Endothelial cell of umbilical vein (primary cell): ENCODE measurements at regions of chr6 and their contacts with region 1.

Region 1: DNA sequence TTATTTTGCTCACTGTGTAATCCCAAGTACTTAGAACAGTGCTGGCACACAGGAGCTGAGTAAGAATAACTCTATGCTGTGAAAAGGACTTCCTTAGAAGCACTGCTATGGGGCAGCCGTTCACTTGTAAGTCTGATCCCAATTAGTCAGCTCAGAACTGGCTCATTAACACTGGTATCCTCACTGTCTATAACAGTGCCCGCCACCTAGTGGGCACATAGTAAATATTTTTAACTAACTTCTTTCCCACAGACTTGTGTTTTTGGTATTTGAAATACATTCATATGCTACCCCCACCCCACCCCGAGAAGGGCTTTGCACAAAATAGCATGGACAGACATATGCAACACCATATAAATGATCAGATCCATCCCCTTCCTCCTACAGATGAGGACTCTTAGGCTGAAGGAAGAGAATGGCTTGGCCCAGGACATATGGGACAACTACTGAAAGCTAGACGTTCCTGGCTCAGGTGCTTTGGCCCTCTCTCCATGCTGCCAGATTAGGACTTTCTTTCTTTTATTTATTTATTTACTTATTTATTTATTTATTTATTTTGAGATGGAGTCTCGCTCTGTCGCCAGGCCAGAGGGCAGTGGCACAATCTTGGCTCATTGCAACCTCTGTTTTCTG is 47.1 kb downstream of the DST start:
- DNase-seq: peak; percentile 76
- H3K4me3 ChIP-seq: no peak overlapping the region
- H3K27ac ChIP-seq: no peak overlapping the region
- H3K4me1 ChIP-seq: no peaks in the 10 kb centered on the region
- H3K27me3 ChIP-seq: no peaks in the 10 kb centered on the region
- CTCF ChIP-seq: peak; percentile 54 to 61
- POLR2A ChIP-seq: no peak

Region 2: DNA sequence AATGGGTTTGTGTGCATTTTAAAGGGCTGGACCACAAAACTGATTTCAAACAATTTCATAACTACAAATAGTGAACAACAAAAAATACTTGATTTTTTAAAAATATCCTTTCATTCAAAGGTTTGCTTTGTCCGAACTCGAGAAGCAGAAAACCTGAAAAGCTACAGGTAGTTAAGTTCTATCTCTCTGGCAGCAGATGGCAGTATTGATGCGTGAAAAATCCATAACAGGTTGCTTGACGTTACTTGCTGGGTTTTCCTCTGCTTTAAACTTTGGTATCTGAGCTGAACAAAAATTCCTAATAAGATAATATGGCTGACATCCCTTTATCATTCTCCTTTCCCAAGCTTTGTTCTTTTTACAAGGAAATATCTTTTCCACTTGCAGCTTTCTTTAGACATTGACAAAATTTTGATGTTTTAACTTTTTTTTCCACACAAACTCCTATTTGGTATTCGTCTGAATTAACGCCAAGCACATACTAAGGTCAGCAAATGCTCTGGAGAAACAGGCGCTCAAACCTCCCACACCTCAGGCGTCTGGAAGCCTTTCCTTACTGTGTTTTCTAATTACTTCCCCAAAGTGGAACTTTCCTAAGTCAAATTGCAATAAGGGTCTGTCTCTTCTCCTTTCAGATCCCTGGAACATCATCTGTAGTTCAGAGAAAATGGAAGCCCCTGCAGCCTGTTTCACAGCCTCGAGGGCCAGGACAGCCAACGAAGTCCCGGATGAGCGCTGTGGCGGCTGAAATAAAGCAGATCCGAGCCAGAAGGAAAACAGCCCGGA is 1318.7 kb before region 1 on chr6:
- CTCF ChIA-PET with region 1: interaction called, 6 read pairs
- POLR2A ChIA-PET with region 1: no interaction called
- dilution Hi-C with region 1: no loop called
- intact Hi-C with region 1: loop called (anchors 10 kb)
- DNase-seq: peak; percentile 64
- H3K4me3 ChIP-seq: no peak overlapping the region
- H3K27ac ChIP-seq: no peak overlapping the region
- H3K4me1 ChIP-seq: no peaks in the 10 kb centered on the region
- H3K27me3 ChIP-seq: peaks cover 0 to 2% of the 10 kb centered on the region in 2 experiments
- CTCF ChIP-seq: peak; percentile 47 to 56
- POLR2A ChIP-seq: no peak

Region 3: DNA sequence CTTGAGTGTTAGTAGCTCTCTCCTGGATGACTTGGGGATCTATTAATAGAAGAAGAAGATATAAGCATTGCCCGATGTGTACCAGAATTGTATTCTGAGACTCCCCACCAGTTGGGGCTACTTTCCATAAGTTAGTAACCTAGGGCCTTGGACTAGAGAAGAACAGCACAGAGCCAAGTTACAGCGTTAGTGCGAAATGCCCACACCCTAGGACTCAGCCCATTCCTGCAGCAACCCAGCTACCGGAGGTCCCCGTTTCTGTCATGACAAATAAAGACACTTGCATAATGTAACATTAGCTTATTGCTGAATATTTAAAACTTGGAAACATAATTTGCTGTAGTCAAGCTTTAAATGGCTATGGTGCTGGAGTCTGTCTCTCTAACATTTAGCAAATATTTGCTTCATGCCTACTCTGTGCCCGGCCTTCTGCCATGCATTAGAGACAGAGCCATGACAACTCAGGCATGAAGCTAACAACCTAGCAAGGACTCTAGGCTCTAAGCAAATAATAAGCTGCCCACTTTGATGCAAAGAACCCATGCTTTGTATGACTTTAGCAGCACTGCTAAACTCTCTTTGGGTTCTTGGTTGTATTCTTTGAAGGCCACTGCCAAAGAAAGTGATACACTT is 244.9 kb before region 1 on chr6:
- CTCF ChIA-PET with region 1: interaction called, 47 read pairs
- POLR2A ChIA-PET with region 1: no interaction called
- dilution Hi-C with region 1: no loop called
- intact Hi-C with region 1: no loop called
- DNase-seq: no peak
- H3K4me3 ChIP-seq: no peak overlapping the region
- H3K27ac ChIP-seq: no peak overlapping the region
- H3K4me1 ChIP-seq: no peaks in the 10 kb centered on the region
- H3K27me3 ChIP-seq: no peaks in the 10 kb centered on the region
- CTCF ChIP-seq: no peak
- POLR2A ChIP-seq: no peak

Region 4: DNA sequence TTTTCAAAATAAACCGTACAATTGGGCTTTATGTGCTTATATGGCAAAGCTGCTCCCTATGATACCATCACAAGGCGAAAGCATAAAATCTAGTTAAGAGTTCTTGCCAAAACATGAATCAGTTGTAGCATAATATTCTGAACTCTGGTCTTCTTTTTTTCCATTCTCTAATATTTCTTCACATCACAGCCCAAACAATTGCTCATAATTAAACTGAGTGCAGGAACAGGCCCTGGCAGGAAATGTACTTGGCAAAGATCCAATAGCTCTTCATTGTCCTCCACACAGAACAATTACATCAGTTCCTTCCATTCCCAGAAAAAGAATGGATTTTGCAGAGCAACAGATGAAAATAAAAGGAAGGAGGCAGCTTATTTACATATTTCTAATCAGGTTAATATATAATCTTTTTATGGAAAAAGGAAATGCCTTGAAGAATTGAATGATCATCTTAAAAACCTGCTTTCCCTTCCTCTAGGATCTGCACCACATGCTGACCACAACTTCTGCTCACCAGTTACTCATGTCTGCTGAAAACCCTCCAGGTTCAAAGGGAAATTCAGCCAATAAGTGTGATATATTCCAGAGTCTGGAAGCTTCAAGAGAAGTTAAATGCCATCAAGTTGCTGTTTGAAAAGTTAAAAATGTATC is 224.9 kb before region 1 on chr6:
- CTCF ChIA-PET with region 1: interaction called, 68 read pairs
- POLR2A ChIA-PET with region 1: no interaction called
- dilution Hi-C with region 1: no loop called
- intact Hi-C with region 1: no loop called
- DNase-seq: peak; percentile 99
- H3K4me3 ChIP-seq: peak overlapping the region in 1 of 3 experiments; percentile 52
- H3K27ac ChIP-seq: peak overlapping the region; percentile 99
- H3K4me1 ChIP-seq: peaks cover 57% of the 10 kb centered on the region
- H3K27me3 ChIP-seq: no peaks in the 10 kb centered on the region
- CTCF ChIP-seq: no peak
- POLR2A ChIP-seq: no peak

Region 5: DNA sequence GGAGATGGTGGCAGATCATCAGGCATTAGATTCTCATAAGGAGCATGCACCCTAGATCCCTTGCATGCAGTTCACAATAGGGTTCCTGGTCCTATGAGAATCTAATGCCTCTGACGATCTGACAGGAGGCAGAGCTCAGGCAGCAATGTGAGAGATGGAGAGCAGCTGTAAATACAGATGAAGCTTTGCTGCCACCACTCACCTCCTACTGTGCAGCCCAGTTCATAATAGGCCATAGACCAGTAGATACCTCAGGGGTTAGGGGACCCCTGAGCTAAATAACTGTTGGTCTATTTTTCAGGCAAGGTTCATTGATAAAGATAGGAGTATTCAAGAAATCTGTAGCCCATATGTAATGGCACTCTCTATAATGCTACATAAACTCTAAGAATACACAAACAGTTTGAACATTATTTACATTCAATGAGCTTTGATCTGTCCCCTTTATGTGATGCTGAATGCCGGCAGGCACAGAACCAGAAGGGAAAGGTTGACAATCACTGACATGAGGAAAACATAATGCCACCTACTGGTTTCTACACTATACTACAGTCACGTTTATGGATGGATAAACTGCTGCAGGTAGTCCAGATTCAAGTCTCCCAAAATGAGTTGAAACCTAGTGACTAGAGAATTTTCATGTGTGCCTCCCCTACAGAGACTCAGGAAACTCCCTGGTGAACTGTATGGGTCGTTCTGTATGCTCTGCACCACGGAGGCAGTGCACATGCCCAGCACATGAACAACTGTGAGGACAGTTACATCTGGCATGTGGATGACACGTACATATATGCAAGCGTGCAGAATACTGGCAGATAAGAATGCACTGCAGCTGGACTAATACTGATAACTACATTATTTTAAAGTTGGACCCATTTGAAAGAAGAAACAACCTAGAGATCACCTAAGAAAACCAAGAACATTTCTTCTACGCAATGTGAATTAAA is 24.9 kb before region 1 on chr6:
- CTCF ChIA-PET with region 1: interaction called, 60 read pairs
- POLR2A ChIA-PET with region 1: no interaction called
- dilution Hi-C with region 1: no loop called
- intact Hi-C with region 1: no loop called
- DNase-seq: peak; percentile 52
- H3K4me3 ChIP-seq: no peak overlapping the region
- H3K27ac ChIP-seq: no peak overlapping the region
- H3K4me1 ChIP-seq: no peaks in the 10 kb centered on the region
- H3K27me3 ChIP-seq: no peaks in the 10 kb centered on the region
- CTCF ChIP-seq: peak; percentile 44 to 51
- POLR2A ChIP-seq: no peak

Region 6: DNA sequence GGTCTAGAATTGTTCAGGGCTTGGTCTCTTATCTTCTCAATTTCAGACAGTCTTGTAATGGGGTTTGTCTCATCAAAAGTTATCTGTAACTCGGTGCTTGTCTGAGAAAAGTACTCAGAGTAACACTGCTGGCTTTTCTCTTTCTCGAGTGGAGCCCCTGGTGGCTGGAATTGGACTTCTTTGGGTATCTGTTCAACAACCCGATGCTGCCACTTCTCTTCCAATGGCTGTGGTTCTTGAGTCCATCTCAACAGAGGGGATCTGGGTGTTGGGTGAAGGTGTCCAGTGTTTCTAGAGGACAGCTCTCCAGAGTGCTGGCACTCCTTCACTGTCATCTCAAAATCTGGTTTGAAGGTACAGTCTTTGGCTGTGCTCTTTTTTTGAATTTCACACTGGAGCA is 22.4 kb after region 1 on chr6:
- CTCF ChIA-PET with region 1: interaction called, 10 read pairs
- POLR2A ChIA-PET with region 1: interaction called, 3 read pairs
- dilution Hi-C with region 1: no loop called
- intact Hi-C with region 1: no loop called
- DNase-seq: no peak
- H3K4me3 ChIP-seq: no peak overlapping the region
- H3K27ac ChIP-seq: no peak overlapping the region
- H3K4me1 ChIP-seq: no peaks in the 10 kb centered on the region
- H3K27me3 ChIP-seq: no peaks in the 10 kb centered on the region
- CTCF ChIP-seq: peak in 1 of 2 donors; percentile 20
- POLR2A ChIP-seq: no peak